ENCODE measurements at regions of chr9 and their contacts with region 1.

Region 1: DNA sequence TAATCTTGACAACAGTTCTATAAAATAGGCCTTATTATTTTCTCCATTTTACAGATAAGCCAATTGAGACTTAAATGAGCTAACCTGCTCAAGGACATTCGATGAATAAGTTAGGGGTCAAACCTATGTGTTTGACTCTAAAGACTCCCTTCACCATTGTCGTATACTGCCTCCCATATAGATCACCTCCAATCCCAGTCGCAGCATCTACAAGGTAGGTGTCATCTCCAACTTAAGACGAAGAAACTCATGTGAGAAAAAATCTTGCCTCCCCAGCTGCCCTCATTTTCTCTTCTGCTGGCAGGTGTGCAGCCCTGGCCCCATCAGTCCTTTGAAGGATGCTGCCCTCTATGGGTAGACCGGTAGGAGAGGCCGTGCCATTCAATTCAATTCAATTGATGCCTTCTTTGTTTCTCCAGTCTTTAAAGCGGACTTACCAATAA is 75.2 kb upstream of the SMARCA2 start:
- DNase-seq: no peak
- ATAC-seq: peak; percentile 85
- H3K4me3 Mint-ChIP-seq: peak overlapping the region; percentile 15
- H3K27ac Mint-ChIP-seq: peak overlapping the region; percentile 32
- H3K4me1 Mint-ChIP-seq: peaks cover 25% of the 10 kb centered on the region
- H3K27me3 Mint-ChIP-seq: no peaks in the 10 kb centered on the region
- CTCF ChIP-seq: no peak

Region 2: DNA sequence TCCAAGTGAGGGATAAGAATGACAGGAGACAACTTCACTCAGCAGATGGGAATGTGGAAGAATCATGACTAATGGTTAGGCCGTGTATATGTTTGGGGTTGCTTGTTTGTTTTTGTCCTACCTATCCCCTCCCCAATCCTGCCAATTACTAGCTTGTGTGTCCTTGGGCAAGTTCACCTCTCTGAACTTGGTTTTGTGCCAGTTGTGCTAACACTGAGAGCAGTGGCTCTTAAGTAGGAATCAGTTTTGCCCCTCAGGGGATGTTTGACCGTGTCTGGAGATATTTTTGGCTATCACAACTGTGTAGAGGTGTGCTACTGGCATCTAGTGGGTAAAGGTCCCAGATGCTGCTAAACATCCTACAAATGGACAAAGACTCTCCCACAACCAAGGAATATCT is 602.8 kb before region 1 on chr9:
- CTCF ChIA-PET with region 1: no interaction called
- POLR2A ChIA-PET with region 1: no interaction called
- intact Hi-C with region 1: no loop called
- DNase-seq: no peak
- ATAC-seq: no peak
- H3K4me3 Mint-ChIP-seq: no peak overlapping the region
- H3K27ac Mint-ChIP-seq: no peak overlapping the region
- H3K4me1 Mint-ChIP-seq: no peaks in the 10 kb centered on the region
- H3K27me3 Mint-ChIP-seq: no peaks in the 10 kb centered on the region
- CTCF ChIP-seq: no peak

Region 3: DNA sequence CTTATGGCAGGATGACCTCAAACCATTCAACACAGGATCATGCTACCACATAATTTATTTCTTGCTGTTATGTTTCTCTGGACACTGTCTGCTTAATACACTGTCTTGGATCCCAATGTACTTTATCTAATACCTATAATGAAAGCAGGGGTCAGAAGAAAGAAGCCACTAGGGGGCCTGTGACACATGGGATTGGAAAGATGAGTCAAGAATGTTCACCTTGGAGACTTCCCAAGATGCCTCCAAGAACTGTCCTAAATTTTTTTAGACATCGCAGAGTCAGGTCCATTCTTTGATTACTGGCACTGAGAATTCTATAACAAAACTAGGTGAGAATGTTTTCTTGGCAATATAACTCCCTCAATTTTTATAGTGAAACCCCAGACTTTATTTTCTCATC is 230.6 kb before region 1 on chr9:
- CTCF ChIA-PET with region 1: interaction called, 9 read pairs
- POLR2A ChIA-PET with region 1: no interaction called
- intact Hi-C with region 1: loop called (anchors 1 kb)
- DNase-seq: no peak
- ATAC-seq: no peak
- H3K4me3 Mint-ChIP-seq: no peak overlapping the region
- H3K27ac Mint-ChIP-seq: no peak overlapping the region
- H3K4me1 Mint-ChIP-seq: no peaks in the 10 kb centered on the region
- H3K27me3 Mint-ChIP-seq: peaks cover 4% of the 10 kb centered on the region
- CTCF ChIP-seq: no peak

Region 4: DNA sequence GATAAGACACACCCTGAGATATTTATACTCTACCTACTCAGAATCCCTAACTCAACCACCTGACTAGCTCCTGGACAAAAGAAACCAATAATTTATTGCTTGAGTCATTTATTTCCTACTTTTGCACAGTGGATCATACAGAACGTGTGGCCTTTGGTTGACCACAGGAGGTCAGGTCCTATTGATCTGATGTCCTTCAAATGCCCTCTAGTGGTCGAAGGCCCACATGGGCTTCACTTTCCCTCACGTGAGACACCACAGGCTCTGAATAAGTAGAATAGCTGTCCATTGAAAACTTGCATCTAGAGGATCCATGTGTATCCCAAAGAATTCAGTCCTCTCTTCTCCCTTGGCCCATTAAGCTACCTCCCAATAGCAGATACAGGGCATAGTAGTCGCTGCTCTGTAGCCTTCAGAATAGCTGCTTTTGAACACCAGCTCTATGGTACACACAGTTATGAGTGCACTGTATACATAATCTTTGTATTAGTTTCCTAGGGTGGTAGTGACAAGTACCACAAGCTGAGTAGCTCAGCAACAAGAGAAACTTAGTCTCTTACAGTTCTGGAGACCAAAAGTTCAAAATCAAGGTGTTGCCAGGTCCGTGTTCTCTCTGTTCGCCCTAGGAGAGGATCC is 102.4 kb before region 1 on chr9:
- CTCF ChIA-PET with region 1: interaction called, 11 read pairs
- POLR2A ChIA-PET with region 1: no interaction called
- intact Hi-C with region 1: no loop called
- DNase-seq: no peak
- ATAC-seq: no peak
- H3K4me3 Mint-ChIP-seq: no peak overlapping the region
- H3K27ac Mint-ChIP-seq: no peak overlapping the region
- H3K4me1 Mint-ChIP-seq: no peaks in the 10 kb centered on the region
- H3K27me3 Mint-ChIP-seq: peaks cover 2% of the 10 kb centered on the region
- CTCF ChIP-seq: no peak

Region 5: DNA sequence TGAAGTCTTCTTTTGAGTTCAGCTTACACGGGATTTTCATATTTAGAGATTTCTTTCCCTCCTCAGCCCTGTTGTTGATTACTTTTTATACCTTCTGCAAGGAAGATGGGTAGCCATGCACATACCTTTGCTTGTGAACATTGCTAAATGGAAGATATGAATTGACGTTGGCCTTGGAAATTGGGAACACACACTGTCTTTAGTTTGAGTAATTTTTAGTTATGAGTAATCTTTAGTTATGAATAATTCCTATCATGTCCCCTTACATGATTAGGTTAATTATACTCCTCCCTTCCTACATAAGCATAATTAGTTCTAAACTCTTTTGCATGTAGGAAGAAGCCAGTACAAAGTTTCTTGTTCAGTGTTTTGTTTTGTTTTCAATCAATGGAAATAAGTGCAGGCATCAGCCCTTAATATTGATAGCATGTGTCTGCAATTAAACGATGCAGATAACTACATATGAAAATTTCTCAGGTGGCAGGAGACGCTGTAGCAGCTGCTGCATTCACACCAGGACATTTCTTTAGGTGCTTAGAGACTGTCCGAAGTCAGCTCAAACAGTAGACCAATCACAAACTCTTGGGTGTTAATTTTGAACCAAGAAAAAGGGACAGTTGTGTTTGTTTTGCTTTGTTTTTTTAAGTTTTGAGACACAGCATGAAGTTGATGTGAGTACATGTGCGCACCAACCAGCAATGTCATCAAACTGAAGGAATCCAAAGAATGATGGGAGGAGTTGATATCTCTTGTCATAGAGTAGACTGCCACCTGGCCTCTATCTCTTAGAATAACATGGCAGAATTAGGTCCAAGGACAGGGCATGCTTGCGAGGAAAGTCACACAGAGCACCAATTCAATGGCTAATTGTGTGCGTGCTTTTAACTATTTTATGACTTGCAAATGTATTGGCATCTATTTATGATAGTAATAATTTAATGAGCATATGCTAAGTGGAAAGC is 126.6 kb after region 1 on chr9:
- CTCF ChIA-PET with region 1: interaction called, 4 read pairs
- POLR2A ChIA-PET with region 1: no interaction called
- intact Hi-C with region 1: loop called (anchors 5 kb)
- DNase-seq: no peak
- ATAC-seq: no peak
- H3K4me3 Mint-ChIP-seq: no peak overlapping the region
- H3K27ac Mint-ChIP-seq: no peak overlapping the region
- H3K4me1 Mint-ChIP-seq: no peaks in the 10 kb centered on the region
- H3K27me3 Mint-ChIP-seq: no peaks in the 10 kb centered on the region
- CTCF ChIP-seq: no peak